Activated CD4-positive, alpha-beta T cell treated with anti-CD3 and anti-CD28 coated beads, Interleukin-2, amount 10 ng/mL, durations not matched to agents 7 days and 5 days (primary cell): ENCODE measurements at regions of chr22 and their contacts with region 1.

Region 1: GRCh38 chr22:39532215-39533071 is at the start of gene RPS19BP1:
- DNase-seq: peak; percentile 100
- H3K4me3 Mint-ChIP-seq: peak within 1 kb of the TSS; percentile 85
- H3K27ac Mint-ChIP-seq: peak within 1 kb of the TSS; percentile 89
- H3K4me1 Mint-ChIP-seq: peaks cover 60% of the 10 kb centered on the region
- H3K27me3 Mint-ChIP-seq: no peaks in the 10 kb centered on the region
- total RNA-seq, gene RPS19BP1: 51.8 to 69.3 TPM

Region 2: GRCh38 chr22:39502109-39502788 is 30.2 kb before region 1 on chr22 and contains the start of gene MIEF1:
- CTCF ChIA-PET with region 1: interaction called, 216 read pairs
- POLR2A ChIA-PET with region 1: interaction called, 4 read pairs
- DNase-seq: peak; percentile 92
- H3K4me3 Mint-ChIP-seq: peak within 1 kb of the TSS; percentile 96
- H3K27ac Mint-ChIP-seq: peak within 1 kb of the TSS; percentile 95
- H3K4me1 Mint-ChIP-seq: peaks cover 41% of the 10 kb centered on the region
- H3K27me3 Mint-ChIP-seq: peaks cover 5% of the 10 kb centered on the region
- total RNA-seq, gene MIEF1: 34.8 to 40.0 TPM

Region 3: DNA sequence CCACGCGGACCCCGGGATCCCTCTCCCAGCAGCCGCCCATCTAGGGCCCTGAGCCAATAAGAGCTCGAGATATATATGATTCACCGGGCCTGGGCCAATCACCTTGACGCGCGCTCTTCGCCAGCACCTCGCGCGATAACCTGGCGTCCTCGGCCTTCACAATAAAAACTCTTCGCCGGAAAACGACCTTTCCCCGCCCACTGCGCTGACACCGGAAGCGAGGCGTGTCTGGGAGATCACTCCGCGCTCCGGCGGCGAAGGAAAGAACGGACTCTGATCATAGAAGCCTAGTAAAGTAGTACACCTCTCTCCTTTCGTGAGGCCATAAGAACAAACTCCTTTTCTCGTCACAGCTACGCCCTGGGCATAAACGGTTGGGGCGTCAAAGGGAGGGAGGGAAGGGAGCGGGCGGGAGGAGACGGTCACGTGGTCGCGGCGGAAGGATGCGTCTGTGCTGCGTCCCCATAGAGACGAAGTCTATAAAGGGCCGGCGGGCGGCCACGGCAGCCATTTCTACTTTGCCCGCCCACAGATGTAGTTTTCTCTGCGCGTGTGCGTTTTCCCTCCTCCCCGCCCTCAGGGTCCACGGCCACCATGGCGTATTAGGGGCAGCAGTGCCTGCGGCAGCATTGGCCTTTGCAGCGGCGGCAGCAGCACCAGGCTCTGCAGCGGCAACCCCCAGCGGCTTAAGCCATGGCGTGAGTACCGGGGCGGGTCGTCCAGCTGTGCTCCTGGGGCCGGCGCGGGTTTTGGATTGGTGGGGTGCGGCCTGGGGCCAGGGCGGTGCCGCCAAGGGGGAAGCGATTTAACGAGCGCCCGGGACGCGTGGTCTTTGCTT is 12.2 kb before region 1 on chr22 and contains the start of gene ATF4:
- CTCF ChIA-PET with region 1: interaction called, 54 read pairs
- POLR2A ChIA-PET with region 1: interaction called, 7 read pairs
- DNase-seq: peak; percentile 98
- H3K4me3 Mint-ChIP-seq: peak within 1 kb of the TSS; percentile 86
- H3K27ac Mint-ChIP-seq: peak within 1 kb of the TSS; percentile 97
- H3K4me1 Mint-ChIP-seq: peaks cover 64% of the 10 kb centered on the region
- H3K27me3 Mint-ChIP-seq: peaks cover 1% of the 10 kb centered on the region
- total RNA-seq, gene ATF4: 372 to 437 TPM

Region 4: DNA sequence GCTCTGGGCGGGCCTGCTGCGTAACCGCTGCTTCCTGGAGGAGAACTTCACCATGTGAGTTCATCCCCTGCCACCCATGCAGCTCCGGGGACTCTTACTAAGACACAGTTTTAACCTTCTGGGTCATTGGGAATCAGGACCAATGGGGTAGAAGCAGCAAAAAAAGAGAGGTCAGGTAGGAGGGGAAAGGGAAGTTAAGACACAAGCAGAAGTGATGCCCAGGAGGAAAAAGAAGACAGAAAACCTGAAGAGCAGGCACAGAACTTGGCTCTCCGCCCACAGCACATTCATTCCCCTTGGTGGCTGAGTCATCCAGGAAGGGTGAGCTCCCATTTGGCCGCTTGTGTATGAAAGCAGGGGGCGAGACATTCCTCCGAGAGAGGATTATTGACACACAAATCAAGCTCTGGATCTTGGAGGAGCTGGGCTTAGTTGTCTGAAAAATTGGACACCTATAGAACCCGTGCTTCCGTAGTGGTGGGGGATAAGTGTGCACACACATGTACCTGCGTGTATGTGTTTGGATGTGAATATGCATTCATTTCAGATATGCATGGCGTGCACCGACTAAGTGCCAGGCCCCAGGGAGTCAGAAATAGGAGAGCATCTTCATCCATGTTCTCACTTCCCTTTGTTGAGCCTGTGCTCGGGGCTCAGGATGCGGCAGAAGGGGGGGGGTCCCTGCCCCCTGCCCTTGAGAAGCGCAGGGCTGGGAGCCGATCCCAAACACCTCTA is 102.4 kb after region 1 on chr22:
- CTCF ChIA-PET with region 1: no interaction called
- POLR2A ChIA-PET with region 1: no interaction called
- DNase-seq: no peak
- H3K4me3 Mint-ChIP-seq: no peak overlapping the region
- H3K27ac Mint-ChIP-seq: no peak overlapping the region
- H3K4me1 Mint-ChIP-seq: peaks cover 12% of the 10 kb centered on the region
- H3K27me3 Mint-ChIP-seq: peaks cover 3% of the 10 kb centered on the region

Region 5: GRCh38 chr22:39970742-39971141 is 438.3 kb after region 1 on chr22:
- CTCF ChIA-PET with region 1: no interaction called
- POLR2A ChIA-PET with region 1: no interaction called
- DNase-seq: no peak
- H3K4me3 Mint-ChIP-seq: no peak overlapping the region
- H3K27ac Mint-ChIP-seq: no peak overlapping the region
- H3K4me1 Mint-ChIP-seq: no peaks in the 10 kb centered on the region
- H3K27me3 Mint-ChIP-seq: no peaks in the 10 kb centered on the region

Region 6: DNA sequence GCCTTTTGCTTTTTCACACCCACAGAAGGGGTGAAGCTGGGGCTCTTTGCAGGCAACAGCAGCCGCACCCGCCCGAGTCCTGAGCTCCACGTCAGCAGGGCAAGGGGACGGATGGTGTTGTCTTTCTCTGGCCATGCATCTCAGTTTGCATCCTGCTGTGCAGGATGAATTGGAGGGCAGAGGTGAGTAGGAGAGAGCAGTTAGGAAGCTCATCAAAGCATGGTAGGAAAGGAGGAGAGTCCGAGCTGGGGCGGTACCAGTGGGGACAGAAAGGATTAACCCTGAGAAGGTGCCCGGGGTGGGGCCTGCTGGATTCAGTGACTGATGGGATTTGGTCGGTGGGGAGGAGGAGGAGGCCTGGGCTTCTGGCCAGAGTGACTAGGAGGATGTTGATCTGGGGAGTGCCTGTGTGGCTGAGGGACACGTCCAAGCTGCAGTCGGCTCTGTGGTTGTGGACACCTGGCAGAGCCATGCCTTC is 476.9 kb after region 1 on chr22:
- CTCF ChIA-PET with region 1: interaction called, 10 read pairs
- POLR2A ChIA-PET with region 1: no interaction called
- DNase-seq: no peak
- H3K4me3 Mint-ChIP-seq: no peak overlapping the region
- H3K27ac Mint-ChIP-seq: peak overlapping the region; percentile 75
- H3K4me1 Mint-ChIP-seq: peaks cover 17% of the 10 kb centered on the region
- H3K27me3 Mint-ChIP-seq: peaks cover 33% of the 10 kb centered on the region

Region 7: DNA sequence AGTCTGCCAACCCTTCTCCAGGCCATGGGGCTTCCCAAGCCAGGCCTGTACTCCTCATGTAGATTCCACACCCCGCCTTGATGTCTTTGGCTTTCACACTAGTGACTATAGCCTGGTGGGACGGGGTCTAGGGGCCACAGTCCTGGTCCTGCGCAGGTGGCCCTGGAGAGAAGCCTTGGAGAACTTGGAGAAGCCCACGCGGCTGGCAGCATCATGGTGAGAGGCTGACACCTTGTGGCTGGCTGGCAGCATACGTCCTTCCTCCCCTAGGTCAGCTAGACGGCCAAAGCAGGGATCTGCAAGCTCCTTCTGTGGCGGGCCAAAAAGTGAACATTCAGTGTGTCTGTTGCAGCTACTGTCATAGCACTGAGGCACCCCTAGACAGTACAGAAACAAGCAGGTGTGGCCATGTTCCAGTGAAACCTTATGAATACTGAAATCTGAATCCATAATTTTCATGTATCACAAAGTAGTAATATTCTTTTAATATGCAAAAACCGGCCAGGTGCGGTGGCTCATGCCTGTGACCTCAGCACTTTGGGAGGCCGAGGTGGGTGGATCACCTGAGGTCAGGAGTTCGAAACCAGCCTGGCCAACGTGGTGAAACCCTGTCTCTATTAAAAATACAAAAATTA is 504.3 kb after region 1 on chr22:
- CTCF ChIA-PET with region 1: interaction called, 16 read pairs
- POLR2A ChIA-PET with region 1: no interaction called
- DNase-seq: peak; percentile 59
- H3K4me3 Mint-ChIP-seq: no peak overlapping the region
- H3K27ac Mint-ChIP-seq: no peak overlapping the region
- H3K4me1 Mint-ChIP-seq: peaks cover 7% of the 10 kb centered on the region
- H3K27me3 Mint-ChIP-seq: peaks cover 11% of the 10 kb centered on the region